Adrenal gland (tissue), 19 donors: ENCODE measurements at regions of chr13 and their contacts with region 1.

Region 1: DNA sequence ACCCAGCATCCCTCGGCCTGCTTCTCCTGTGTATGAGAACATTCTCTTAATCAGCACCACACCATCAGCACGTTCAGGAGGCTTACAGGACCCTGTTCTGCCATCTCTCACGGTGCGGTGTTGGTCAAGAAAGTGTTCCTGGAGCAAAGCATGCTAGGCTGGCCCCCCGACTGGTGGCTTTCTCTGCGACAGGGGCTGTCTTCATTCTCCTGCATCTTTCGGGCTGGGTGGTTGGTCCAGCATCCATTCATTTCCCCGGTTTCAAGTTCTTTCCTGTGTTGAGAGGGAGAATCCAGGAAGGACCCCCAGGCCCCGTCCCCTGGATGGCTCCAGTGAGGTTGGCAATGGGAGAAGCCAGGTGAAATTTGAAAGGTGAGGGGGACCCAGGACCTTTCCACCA is 55.8 kb downstream of the C1QTNF9 start:
- DNase-seq: no peak
- H3K4me3 ChIP-seq: no peak overlapping the region
- H3K27ac ChIP-seq: no peak overlapping the region
- H3K4me1 ChIP-seq: no peaks in the 10 kb centered on the region
- H3K27me3 ChIP-seq: no peaks in the 10 kb centered on the region
- CTCF ChIP-seq: no peak
- POLR2A ChIP-seq: no peak

Region 2: DNA sequence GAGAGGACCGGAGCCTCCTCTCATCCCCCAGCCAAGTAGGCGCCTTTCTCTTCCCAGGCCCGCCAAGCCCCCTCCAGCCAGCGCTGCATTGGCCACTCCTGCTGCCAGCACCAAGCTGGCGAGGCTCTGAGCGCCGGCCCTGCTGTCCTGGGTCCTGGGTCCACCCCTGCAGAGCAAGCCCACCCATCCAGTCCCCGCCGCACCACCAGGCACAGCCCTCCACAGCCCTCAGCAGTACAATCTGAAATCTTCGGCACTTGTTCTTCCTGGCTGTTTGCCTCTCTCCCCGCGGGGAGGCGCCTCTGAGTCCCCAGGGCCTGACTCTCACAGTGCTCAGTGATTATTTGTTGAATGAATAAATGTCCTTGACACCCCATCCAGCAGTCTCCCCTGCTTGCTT is 1420.8 kb before region 1 on chr13:
- intact Hi-C with region 1: loop called in 1 of 2 experiments (anchors 5 kb)
- DNase-seq: no peak
- H3K4me3 ChIP-seq: no peak overlapping the region
- H3K27ac ChIP-seq: no peak overlapping the region
- H3K4me1 ChIP-seq: no peaks in the 10 kb centered on the region
- H3K27me3 ChIP-seq: no peaks in the 10 kb centered on the region
- CTCF ChIP-seq: no peak
- POLR2A ChIP-seq: no peak

Region 3: DNA sequence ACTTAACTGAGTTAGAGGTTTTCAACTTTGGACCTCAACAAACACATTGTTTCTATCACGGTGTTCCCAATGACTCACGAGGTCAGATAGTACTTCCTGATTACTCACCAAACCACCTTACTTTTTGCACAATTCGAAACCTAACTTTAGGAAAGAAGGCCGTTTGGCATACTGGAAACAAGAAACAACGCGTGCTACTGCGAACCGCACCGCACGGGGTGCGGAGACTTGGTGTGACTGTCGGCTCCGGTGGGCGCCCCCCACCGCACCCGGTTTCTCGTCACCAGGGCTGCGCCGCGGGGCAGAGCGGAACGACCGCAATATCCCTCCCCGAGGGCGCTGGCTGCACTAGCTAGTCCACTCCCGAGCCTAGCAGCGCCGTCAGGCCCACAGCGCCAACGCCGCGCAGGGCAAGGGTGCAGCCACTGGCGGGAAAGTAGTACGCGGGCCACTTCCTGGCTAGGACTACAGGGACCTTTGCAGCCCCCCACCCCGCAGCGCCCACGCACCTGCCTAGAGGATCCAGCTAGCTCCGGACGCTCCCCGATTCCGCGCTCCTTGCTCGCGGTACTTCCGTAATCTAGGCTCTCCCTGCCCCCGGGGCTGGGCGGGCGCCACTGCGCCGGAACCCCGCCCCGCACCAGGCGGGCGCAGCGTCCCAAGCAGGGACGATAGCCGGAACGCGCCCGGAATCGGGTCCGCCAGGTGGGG is 147.2 kb after region 1 on chr13 and contains the start of gene PARP4:
- intact Hi-C with region 1: no loop called
- DNase-seq: peak; percentile 76 to 85 (median 80)
- H3K4me3 ChIP-seq: peak within 1 kb of the TSS; percentile 61 to 96 (median 72)
- H3K27ac ChIP-seq: peak within 1 kb of the TSS; percentile 92 to 99 (median 96)
- H3K4me1 ChIP-seq: peaks cover 9 to 31% of the 10 kb centered on the region in 2 donors
- H3K27me3 ChIP-seq: no peaks in the 10 kb centered on the region
- CTCF ChIP-seq: no peak
- POLR2A ChIP-seq: peak; percentile 35 to 91
- total RNA-seq, gene PARP4: 39.5 to 92.2 (median 71.8) TPM